SK-N-SH (cell line): ENCODE measurements at regions of chr12 and their contacts with region 1.

Region 1: GRCh38 chr12:12786716-12787601 is 1.5 kb downstream of the APOLD1 start:
- DNase-seq: peak; percentile 97
- H3K4me3 ChIP-seq: peak overlapping the region; percentile 51 to 54
- H3K27ac ChIP-seq: peak overlapping the region; percentile 49 to 92; a peak in 3 of 4 replicates
- H3K4me1 ChIP-seq: peaks cover 5 to 30% of the 10 kb centered on the region in 2 experiments; a peak in 3 of 4 replicates
- H3K27me3 ChIP-seq: no peaks in the 10 kb centered on the region
- CTCF ChIP-seq: 0 out of 2 replicates have a peak, but pooled peaks have one; percentile 5
- EP300 ChIP-seq: peak in 1 of 2 experiments; percentile 22; a peak in 1 of 4 replicates
- RAD21 ChIP-seq: no peak

Region 2: GRCh38 chr12:12685305-12685704 is 101.7 kb before region 1 on chr12:
- CTCF ChIA-PET with region 1: no interaction called
- POLR2A ChIA-PET with region 1: no interaction called
- DNase-seq: no peak
- H3K4me3 ChIP-seq: no peak overlapping the region
- H3K27ac ChIP-seq: no peak overlapping the region; a peak in 1 of 4 replicates
- H3K4me1 ChIP-seq: peaks cover 0 to 14% of the 10 kb centered on the region in 2 experiments; a peak in 2 of 4 replicates
- H3K27me3 ChIP-seq: no peaks in the 10 kb centered on the region
- CTCF ChIP-seq: no peak
- EP300 ChIP-seq: no peak
- RAD21 ChIP-seq: no peak

Region 3: GRCh38 chr12:12803186-12803585 is 16.2 kb after region 1 on chr12:
- CTCF ChIA-PET with region 1: interaction called, 10 read pairs
- POLR2A ChIA-PET with region 1: no interaction called
- DNase-seq: peak; percentile 27
- H3K4me3 ChIP-seq: no peak overlapping the region
- H3K27ac ChIP-seq: peak overlapping the region in 1 of 2 experiments; percentile 59; a peak in 2 of 4 replicates
- H3K4me1 ChIP-seq: peaks cover 4 to 26% of the 10 kb centered on the region in 2 experiments; a peak in 2 of 4 replicates
- H3K27me3 ChIP-seq: no peaks in the 10 kb centered on the region
- CTCF ChIP-seq: no peak
- EP300 ChIP-seq: peak in 1 of 2 experiments; percentile 34; a peak in 1 of 4 replicates
- RAD21 ChIP-seq: no peak

Region 4: DNA sequence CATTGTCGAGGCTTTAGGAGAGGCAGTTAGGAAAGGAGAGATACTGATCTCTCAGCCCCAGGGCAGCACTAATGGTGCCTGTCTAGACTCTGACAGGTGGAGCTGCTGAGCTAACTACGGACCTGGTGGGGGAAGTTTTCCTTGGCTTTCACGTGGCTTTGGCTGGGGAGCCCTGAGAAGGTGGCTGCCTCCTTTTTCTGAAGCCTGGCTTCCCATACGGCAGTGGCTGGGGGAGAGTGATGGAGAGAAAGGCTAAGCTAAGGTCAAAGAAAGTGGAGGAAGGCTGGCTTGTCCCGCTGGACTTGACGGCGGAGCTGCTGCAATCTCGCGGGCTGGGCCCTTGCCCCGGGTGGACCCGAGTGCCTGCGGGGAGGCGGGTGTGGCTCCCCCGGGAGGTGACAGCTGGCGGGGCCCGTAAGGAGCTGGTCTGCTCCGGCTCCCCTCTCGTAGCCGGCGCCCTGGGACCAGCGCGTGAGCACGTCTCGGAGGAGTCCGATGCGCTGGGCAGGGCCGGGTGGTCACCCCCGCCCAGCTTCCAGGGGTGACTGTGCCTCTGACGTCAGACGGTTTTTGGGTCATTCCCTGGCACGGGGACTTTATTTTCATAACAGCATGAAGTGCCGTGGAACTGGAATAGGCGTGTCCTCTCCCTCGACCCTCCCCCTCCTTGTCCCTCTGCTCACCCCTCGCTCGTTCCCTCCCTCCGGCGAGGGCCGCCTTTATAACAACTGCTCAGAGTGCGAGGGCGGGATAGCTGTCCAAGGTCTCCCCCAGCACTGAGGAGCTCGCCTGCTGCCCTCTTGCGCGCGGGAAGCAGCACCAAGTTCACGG is 104.1 kb after region 1 on chr12 and contains the start of gene GPRC5A:
- CTCF ChIA-PET with region 1: interaction called, 16 read pairs
- POLR2A ChIA-PET with region 1: no interaction called
- DNase-seq: peak; percentile 68
- H3K4me3 ChIP-seq: peak within 1 kb of the TSS; percentile 51 to 60
- H3K27ac ChIP-seq: peak within 1 kb of the TSS; percentile 23 to 33; a peak in 3 of 4 replicates
- H3K4me1 ChIP-seq: peaks cover 5 to 14% of the 10 kb centered on the region in 2 experiments; a peak in 1 of 4 replicates
- H3K27me3 ChIP-seq: no peaks in the 10 kb centered on the region
- CTCF ChIP-seq: peak; percentile 24; the same call in 1 of the 2 replicates
- EP300 ChIP-seq: peak in 1 of 2 experiments; percentile 49; a peak in 1 of 4 replicates
- RAD21 ChIP-seq: no peak
- polyA plus RNA-seq, gene GPRC5A: 12.7 and 16.1 TPM in 2 replicates